Caco-2 (cell line): ENCODE measurements at regions of chr10 and their contacts with region 1.

Region 1: GRCh38 chr10:52353960-52354394 is 39.9 kb downstream of the DKK1 start:
- DNase-seq: peak in 1 of 2 experiments; percentile 80
- H3K4me3 ChIP-seq: no peak overlapping the region
- H3K4me3 Mint-ChIP-seq: no peak overlapping the region
- H3K27ac Mint-ChIP-seq: peak overlapping the region; percentile 86
- H3K4me1 ChIP-seq: peaks cover 61% of the 10 kb centered on the region
- H3K4me1 Mint-ChIP-seq: peaks cover 66% of the 10 kb centered on the region
- H3K27me3 ChIP-seq: no peaks in the 10 kb centered on the region
- H3K27me3 Mint-ChIP-seq: no peaks in the 10 kb centered on the region
- CTCF ChIP-seq: no peak

Region 2: DNA sequence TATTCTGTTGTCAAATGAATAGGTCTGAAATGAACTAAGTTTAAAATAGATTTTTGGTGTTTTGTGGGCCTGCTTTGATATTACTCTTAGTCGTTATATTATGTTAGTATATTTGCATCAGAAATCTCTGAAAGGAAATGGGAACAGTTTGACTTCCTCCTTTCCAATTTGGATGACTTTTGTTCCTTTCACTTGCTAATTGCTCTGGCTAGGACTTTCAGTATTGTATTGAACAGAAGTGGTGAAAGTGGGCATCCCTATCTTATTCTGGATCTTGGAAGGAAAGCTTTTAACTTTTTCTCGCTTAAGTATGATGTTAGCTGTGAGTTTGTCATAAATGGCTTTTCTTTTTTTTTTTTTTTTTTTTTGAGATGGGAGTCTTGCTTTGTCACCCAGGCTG is 313.5 kb before region 1 on chr10:
- CTCF ChIA-PET with region 1: no interaction called
- POLR2A ChIA-PET with region 1: no interaction called
- intact Hi-C with region 1: loop called (anchors 10 kb)
- DNase-seq: no peak
- H3K4me3 ChIP-seq: no peak overlapping the region
- H3K4me3 Mint-ChIP-seq: no peak overlapping the region
- H3K27ac Mint-ChIP-seq: no peak overlapping the region
- H3K4me1 ChIP-seq: peaks cover 32% of the 10 kb centered on the region
- H3K4me1 Mint-ChIP-seq: peaks cover 32% of the 10 kb centered on the region
- H3K27me3 ChIP-seq: no peaks in the 10 kb centered on the region
- H3K27me3 Mint-ChIP-seq: no peaks in the 10 kb centered on the region
- CTCF ChIP-seq: no peak

Region 3: DNA sequence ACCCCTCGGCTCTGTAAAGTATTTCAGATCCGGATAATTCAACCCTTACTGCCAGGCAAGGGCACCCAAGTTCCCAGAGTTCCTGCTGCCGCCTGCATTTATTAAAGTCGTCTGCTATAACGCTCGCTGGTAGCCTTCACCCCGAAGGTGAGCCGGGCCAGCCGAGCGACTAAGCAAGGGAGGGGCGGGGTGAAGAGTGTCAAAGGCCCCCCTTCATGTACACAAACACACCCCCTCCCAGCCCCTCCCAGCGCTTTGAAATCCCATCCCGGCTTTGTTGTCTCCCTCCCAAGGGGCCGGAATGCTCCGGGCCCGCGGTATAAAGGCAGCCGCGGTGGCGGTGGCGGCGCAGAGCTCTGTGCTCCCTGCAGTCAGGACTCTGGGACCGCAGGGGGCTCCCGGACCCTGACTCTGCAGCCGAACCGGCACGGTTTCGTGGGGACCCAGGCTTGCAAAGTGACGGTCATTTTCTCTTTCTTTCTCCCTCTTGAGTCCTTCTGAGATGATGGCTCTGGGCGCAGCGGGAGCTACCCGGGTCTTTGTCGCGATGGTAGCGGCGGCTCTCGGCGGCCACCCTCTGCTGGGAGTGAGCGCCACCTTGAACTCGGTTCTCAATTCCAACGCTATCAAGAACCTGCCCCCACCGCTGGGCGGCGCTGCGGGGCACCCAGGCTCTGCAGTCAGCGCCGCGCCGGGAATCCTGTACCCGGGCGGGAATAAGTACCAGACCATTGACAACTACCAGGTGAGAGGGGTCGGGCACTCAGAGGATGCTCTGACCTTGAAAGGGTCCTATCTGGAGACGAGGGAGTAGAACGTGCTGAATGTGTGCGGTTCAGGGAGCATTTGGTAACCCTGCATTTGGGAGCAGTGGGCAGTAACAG is 39.8 kb before region 1 on chr10 and contains the start of gene DKK1:
- CTCF ChIA-PET with region 1: interaction called, 10 read pairs
- POLR2A ChIA-PET with region 1: interaction called, 4 read pairs
- intact Hi-C with region 1: loop called (anchors 1 kb)
- DNase-seq: peak; percentile 99 to 100
- H3K4me3 ChIP-seq: peak within 1 kb of the TSS; percentile 63
- H3K4me3 Mint-ChIP-seq: peak within 1 kb of the TSS; percentile 96
- H3K27ac Mint-ChIP-seq: peak within 1 kb of the TSS; percentile 95
- H3K4me1 ChIP-seq: peaks cover 40% of the 10 kb centered on the region
- H3K4me1 Mint-ChIP-seq: peaks cover 33% of the 10 kb centered on the region
- H3K27me3 ChIP-seq: no peaks in the 10 kb centered on the region
- H3K27me3 Mint-ChIP-seq: no peaks in the 10 kb centered on the region
- CTCF ChIP-seq: peak; percentile 99
- total RNA-seq, gene DKK1: 1,709 and 1,866 TPM in 2 replicates

Region 4: DNA sequence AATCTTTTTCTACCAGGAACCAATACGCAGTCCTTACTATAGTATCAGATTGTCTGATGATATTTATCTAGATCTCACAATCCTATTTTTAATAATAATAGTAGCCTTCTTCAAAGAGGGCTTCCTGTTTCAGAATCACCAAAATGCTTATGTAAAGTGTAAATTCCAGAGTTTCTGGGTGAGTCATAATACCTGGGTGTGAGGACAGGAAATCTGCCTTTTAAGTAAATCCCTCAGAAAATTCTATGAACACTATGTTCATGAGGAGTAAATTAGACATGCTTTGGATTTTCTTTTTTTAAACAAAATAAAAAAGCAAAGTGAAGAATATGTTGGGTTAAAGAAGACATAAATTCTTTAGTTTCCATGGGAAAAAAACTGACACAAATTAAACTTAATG is 19.4 kb before region 1 on chr10:
- CTCF ChIA-PET with region 1: no interaction called
- POLR2A ChIA-PET with region 1: no interaction called
- intact Hi-C with region 1: loop called (anchors 2 kb)
- DNase-seq: no peak
- H3K4me3 ChIP-seq: no peak overlapping the region
- H3K4me3 Mint-ChIP-seq: no peak overlapping the region
- H3K27ac Mint-ChIP-seq: peak overlapping the region; percentile 33
- H3K4me1 ChIP-seq: peaks cover 45% of the 10 kb centered on the region
- H3K4me1 Mint-ChIP-seq: peaks cover 47% of the 10 kb centered on the region
- H3K27me3 ChIP-seq: no peaks in the 10 kb centered on the region
- H3K27me3 Mint-ChIP-seq: no peaks in the 10 kb centered on the region
- CTCF ChIP-seq: no peak

Region 5: DNA sequence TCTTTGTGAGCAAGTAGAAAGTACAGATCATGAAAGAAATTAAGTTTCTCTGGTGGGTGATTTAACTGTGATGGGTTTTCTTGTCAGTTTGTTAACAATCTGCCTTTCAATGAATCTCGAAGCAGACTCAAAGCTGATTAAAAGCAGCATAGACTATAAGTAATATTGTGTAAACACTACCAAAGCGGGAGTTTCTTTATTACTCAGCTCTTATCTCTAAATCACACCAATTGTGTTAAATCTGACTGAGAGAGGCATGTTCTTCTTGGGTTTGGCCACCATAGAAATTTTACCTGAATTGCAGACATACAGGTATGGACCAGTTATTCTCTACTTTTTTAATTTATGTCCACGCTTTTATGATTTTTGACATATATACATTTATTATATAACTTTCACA is 25.3 kb after region 1 on chr10:
- CTCF ChIA-PET with region 1: no interaction called
- POLR2A ChIA-PET with region 1: no interaction called
- intact Hi-C with region 1: loop called (anchors 1 kb)
- DNase-seq: no peak
- H3K4me3 ChIP-seq: no peak overlapping the region
- H3K4me3 Mint-ChIP-seq: peak overlapping the region; percentile 54
- H3K27ac Mint-ChIP-seq: peak overlapping the region; percentile 80
- H3K4me1 ChIP-seq: peaks cover 69% of the 10 kb centered on the region
- H3K4me1 Mint-ChIP-seq: peaks cover 47% of the 10 kb centered on the region
- H3K27me3 ChIP-seq: no peaks in the 10 kb centered on the region
- H3K27me3 Mint-ChIP-seq: no peaks in the 10 kb centered on the region
- CTCF ChIP-seq: no peak

Region 6: GRCh38 chr10:52443419-52444388 is 89.7 kb after region 1 on chr10:
- CTCF ChIA-PET with region 1: no interaction called
- POLR2A ChIA-PET with region 1: no interaction called
- intact Hi-C with region 1: loop called (anchors 1 kb)
- DNase-seq: peak in 1 of 2 experiments; percentile 71
- H3K4me3 ChIP-seq: no peak overlapping the region
- H3K4me3 Mint-ChIP-seq: peak overlapping the region; percentile 29
- H3K27ac Mint-ChIP-seq: peak overlapping the region; percentile 83
- H3K4me1 ChIP-seq: peaks cover 57% of the 10 kb centered on the region
- H3K4me1 Mint-ChIP-seq: peaks cover 39% of the 10 kb centered on the region
- H3K27me3 ChIP-seq: no peaks in the 10 kb centered on the region
- H3K27me3 Mint-ChIP-seq: no peaks in the 10 kb centered on the region
- CTCF ChIP-seq: no peak